ENCODE measurements at regions of chr7 and their contacts with region 1.

Region 1: DNA sequence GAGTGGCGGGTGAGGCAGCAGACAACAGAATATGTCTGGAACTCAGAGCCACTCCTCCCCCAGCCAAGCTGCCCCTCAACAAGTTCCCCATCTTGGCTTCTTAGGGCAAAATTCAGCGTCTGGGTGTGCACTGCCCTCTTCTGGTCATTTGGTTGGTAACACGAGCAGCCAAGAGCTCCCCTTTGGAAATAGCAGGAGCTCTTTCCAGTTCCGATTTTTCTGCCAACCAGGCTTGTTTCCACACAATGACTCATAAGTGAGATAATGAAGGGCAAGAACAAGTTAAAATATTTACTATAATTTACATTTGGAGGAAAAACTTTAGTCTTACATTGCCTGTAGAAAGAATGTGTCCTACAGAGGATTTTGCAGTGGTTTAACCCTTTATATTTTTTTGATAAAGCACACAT is 70.5 kb downstream of the ADCYAP1R1 start:
- DNase-seq: peak; percentile 81
- H3K4me3 ChIP-seq: no peak overlapping the region
- H3K27ac ChIP-seq: no peak overlapping the region
- H3K27me3 ChIP-seq: no peaks in the 10 kb centered on the region
- CTCF ChIP-seq: peak; percentile 82

Region 2: DNA sequence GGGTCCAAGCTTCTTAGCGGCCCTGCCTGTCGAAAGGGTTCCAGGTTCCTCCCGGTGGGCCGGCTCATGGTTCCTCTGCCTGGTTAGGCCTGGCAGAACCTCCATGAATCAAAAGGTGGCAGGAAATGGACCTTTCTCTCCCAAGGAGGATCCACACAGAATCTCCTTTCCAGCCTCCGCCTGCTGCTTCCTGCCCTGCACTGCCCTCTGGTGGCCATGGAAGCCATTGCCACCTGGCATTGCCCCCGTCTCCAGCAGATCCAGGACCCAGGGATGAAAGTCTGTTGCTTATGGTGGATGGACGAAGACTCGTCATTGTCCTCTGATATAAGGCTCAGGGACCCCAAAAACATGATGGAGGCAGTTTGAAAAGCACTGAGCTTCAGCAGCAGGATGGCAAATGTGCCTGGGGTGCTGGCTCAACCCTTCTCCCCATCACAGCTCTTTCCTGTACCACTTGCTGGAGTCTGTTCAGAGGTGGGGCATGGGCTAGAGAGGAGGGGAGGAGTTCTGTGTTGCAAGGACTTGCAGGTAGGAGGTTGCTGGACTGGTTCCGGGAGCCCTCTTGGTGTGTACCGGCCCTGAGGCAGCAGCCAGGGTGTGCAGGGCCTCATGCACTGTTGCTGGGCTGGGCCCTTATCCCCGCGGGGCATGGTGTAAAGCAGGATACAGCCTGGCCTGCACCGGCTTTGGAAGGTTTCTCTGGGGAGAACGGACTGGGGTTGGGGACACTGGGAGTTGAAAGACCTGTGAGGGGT is 382.1 kb before region 1 on chr7:
- CTCF ChIA-PET with region 1: interaction called, 16 read pairs
- POLR2A ChIA-PET with region 1: no interaction called
- DNase-seq: peak; percentile 23
- H3K4me3 ChIP-seq: no peak overlapping the region
- H3K27ac ChIP-seq: no peak overlapping the region
- H3K27me3 ChIP-seq: peaks cover 23% of the 10 kb centered on the region
- CTCF ChIP-seq: peak; percentile 99

Region 3: GRCh38 chr7:30800785-30801252 is 321.8 kb before region 1 on chr7:
- CTCF ChIA-PET with region 1: interaction called, 32 read pairs
- POLR2A ChIA-PET with region 1: interaction called, 5 read pairs
- DNase-seq: peak; percentile 63
- H3K4me3 ChIP-seq: no peak overlapping the region
- H3K27ac ChIP-seq: no peak overlapping the region
- H3K27me3 ChIP-seq: no peaks in the 10 kb centered on the region
- CTCF ChIP-seq: peak; percentile 79

Region 4: DNA sequence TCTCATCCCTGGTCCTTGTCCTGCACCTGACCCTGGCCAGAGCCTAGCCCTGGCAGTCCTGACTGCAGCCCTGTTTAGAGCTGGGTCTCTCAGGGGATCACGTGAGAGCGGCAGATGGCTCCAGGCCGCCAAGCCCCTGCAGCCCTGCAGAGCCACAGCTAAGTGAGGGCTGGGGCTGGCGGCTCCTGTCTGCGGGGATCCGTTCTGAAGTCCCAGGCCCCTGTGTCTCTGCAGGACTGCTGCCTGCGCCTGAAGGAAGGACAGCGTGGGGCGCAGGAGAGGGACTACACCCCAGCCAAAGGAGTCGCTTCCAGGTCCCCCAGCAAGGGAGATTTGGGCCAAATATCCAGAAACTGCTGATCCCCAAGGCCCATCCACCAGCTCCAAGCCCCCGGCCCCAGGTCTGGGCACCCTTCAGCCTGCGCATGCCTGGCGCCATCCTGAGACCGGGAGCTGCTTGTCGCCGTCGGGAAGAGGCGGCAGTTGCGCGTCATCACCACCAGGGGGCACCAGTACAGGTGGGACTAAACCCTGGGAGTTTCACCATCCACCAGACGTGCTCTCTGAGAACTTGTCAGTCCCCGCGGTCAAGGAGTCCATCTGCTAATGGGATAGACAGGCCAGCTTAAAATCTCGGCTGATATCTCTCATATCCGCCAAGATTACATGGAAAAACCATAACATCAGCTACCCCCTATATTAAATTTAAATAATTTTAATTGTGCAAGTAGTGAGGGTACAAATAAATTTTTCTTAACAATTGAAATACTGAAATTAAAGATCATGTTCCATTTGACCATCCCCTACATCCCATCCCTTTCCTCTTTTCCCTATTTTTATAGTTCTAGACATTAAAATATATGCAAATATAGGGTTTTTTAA is 184.0 kb before region 1 on chr7:
- CTCF ChIA-PET with region 1: interaction called, 35 read pairs
- POLR2A ChIA-PET with region 1: no interaction called
- DNase-seq: peak; percentile 32
- H3K4me3 ChIP-seq: no peak overlapping the region; the same call in 1 of the 2 replicates
- H3K27ac ChIP-seq: no peak overlapping the region
- H3K27me3 ChIP-seq: peaks cover 25% of the 10 kb centered on the region
- CTCF ChIP-seq: peak; percentile 97

Region 5: GRCh38 chr7:30983042-30983913 is 139.4 kb before region 1 on chr7:
- CTCF ChIA-PET with region 1: interaction called, 338 read pairs
- POLR2A ChIA-PET with region 1: no interaction called
- DNase-seq: peak; percentile 53
- H3K4me3 ChIP-seq: no peak overlapping the region
- H3K27ac ChIP-seq: no peak overlapping the region
- H3K27me3 ChIP-seq: peaks cover 21% of the 10 kb centered on the region
- CTCF ChIP-seq: peak; percentile 91

Region 6: DNA sequence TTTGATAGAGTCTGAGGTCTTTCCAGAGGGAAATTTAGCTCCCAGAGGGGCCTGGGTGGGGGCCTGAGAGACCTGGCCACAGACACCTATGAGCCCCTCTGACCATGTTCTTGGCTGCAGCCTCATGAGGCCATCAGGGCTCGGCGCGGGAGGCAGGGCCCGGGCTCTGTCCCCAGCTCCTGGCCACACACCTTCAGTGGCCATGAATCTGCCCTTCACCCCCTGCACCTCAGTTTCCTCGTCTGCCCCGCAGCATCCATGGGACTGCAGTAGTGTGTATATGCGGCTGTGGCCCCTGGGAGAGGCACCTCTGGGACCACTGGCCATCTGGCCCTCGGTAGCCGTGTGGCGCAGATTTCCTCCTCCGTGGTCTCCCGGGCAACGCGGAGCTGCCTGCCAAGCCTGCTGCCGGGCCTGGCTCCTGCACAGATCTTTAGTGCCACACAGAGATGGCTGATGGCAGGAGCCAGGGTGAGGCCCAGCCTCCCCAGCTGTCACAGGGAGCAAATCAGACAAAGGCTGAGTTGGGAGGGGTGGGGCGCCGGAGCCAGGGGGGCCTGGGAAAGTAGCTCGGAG is 94.1 kb before region 1 on chr7:
- CTCF ChIA-PET with region 1: interaction called, 10 read pairs
- POLR2A ChIA-PET with region 1: no interaction called
- DNase-seq: no peak
- H3K4me3 ChIP-seq: no peak overlapping the region
- H3K27ac ChIP-seq: no peak overlapping the region
- H3K27me3 ChIP-seq: peaks cover 6% of the 10 kb centered on the region
- CTCF ChIP-seq: no peak

Region 7: GRCh38 chr7:31151849-31152248 is 29.2 kb after region 1 on chr7:
- CTCF ChIA-PET with region 1: no interaction called
- POLR2A ChIA-PET with region 1: no interaction called
- DNase-seq: no peak
- H3K4me3 ChIP-seq: no peak overlapping the region
- H3K27ac ChIP-seq: no peak overlapping the region
- H3K27me3 ChIP-seq: no peaks in the 10 kb centered on the region
- CTCF ChIP-seq: no peak

Region 8: GRCh38 chr7:31311552-31311951 is 188.9 kb after region 1 on chr7:
- CTCF ChIA-PET with region 1: no interaction called
- POLR2A ChIA-PET with region 1: no interaction called
- DNase-seq: no peak
- H3K4me3 ChIP-seq: no peak overlapping the region
- H3K27ac ChIP-seq: no peak overlapping the region
- H3K27me3 ChIP-seq: no peaks in the 10 kb centered on the region
- CTCF ChIP-seq: no peak